Ascending aorta (tissue), 2 donors: ENCODE measurements at regions of chr17 and their contacts with region 1.

Region 1: DNA sequence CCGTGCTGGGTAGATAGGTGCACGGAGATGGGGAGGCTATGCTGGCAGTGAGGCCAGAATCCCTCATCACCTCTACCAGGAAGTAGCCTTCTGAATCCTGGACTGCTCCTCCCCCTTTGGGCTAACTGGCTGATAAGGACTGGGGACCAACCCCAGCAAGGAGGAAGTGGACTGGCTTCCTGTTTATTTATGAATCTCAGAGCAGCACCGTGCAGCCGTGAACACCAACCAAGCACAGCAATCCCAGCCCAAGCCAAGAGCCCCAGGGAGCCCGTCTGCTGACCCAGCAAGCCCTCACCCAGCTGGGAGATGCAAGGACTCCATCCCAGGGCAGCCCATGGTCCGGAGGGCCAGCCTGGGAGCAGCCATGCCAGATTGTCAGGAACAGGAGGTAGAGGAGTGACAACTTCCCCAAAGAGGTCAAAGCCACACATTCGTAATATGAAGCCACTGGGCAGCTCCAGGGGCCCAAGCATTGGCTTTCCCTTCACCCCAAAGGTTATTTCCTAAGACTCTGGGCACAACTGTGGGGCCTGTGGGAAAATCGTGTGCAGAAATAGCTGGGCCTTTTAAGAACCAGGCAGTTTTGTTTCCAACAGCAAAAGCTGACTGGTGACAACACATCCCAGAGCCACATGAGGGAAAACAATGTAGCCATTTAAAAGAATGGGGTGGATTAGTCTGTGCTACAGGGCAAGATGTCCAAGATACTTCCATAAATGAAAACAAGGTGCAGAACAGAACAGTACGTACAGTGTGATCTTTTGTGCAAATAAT is 23.9 kb downstream of the PHB1 start:
- DNase-seq: no peak
- H3K4me3 ChIP-seq: no peak overlapping the region
- H3K27ac ChIP-seq: peak overlapping the region in 1 of 2 donors; percentile 12
- H3K4me1 ChIP-seq: peaks cover 0 to 4% of the 10 kb centered on the region in 2 donors
- H3K27me3 ChIP-seq: no peaks in the 10 kb centered on the region
- CTCF ChIP-seq: no peak

Region 2: GRCh38 chr17:49361902-49362722 is 28.6 kb before region 1 on chr17 and contains the start of gene ZNF652:
- intact Hi-C with region 1: loop called (anchors 2 kb)
- DNase-seq: peak; percentile 69 to 92
- H3K4me3 ChIP-seq: peak within 1 kb of the TSS; percentile 77 to 100
- H3K27ac ChIP-seq: peak within 1 kb of the TSS; percentile 86 to 98
- H3K4me1 ChIP-seq: peaks cover 3% of the 10 kb centered on the region in 2 donors
- H3K27me3 ChIP-seq: no peaks in the 10 kb centered on the region
- CTCF ChIP-seq: no peak
- total RNA-seq, gene ZNF652: 13.5 TPM